ENCODE measurements at regions of chr2 and their contacts with region 1.

Region 1: GRCh38 chr2:62415019-62415431 is 91.0 kb downstream of the TMEM17 start:
- DNase-seq: no peak
- ATAC-seq: no peak
- H3K4me3 ChIP-seq: no peak overlapping the region
- H3K27ac ChIP-seq: no peak overlapping the region
- H3K4me1 ChIP-seq: peaks cover 4% of the 10 kb centered on the region
- H3K27me3 ChIP-seq: no peaks in the 10 kb centered on the region
- CTCF ChIP-seq: no peak

Region 2: DNA sequence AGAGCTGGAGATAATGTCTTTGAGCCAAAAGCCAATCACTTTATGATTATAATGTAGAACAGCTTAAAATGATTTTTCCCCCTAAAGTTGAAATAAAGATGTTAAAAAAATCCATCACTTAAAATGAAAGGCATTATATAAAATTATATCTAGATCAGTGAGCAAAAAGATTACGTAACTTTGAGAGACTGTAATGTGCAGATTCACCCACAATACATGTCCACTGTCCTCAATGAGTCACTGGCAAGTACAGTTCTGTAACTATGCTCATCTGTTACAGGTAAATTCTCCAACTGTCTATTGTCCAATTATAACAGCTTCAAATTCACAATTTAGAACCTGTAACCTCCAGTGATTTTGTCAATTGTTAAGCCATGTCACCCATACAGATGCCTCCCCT is 580.1 kb before region 1 on chr2:
- intact Hi-C with region 1: no loop called
- DNase-seq: no peak
- ATAC-seq: no peak
- H3K4me3 ChIP-seq: no peak overlapping the region
- H3K27ac ChIP-seq: no peak overlapping the region
- H3K4me1 ChIP-seq: no peaks in the 10 kb centered on the region
- H3K27me3 ChIP-seq: no peaks in the 10 kb centered on the region
- CTCF ChIP-seq: no peak

Region 3: GRCh38 chr2:61922714-61923113 is 492.3 kb before region 1 on chr2:
- intact Hi-C with region 1: loop called (anchors 2 kb)
- DNase-seq: no peak
- ATAC-seq: no peak
- H3K4me3 ChIP-seq: no peak overlapping the region
- H3K27ac ChIP-seq: no peak overlapping the region
- H3K4me1 ChIP-seq: peaks cover 6% of the 10 kb centered on the region
- H3K27me3 ChIP-seq: no peaks in the 10 kb centered on the region
- CTCF ChIP-seq: no peak

Region 4: DNA sequence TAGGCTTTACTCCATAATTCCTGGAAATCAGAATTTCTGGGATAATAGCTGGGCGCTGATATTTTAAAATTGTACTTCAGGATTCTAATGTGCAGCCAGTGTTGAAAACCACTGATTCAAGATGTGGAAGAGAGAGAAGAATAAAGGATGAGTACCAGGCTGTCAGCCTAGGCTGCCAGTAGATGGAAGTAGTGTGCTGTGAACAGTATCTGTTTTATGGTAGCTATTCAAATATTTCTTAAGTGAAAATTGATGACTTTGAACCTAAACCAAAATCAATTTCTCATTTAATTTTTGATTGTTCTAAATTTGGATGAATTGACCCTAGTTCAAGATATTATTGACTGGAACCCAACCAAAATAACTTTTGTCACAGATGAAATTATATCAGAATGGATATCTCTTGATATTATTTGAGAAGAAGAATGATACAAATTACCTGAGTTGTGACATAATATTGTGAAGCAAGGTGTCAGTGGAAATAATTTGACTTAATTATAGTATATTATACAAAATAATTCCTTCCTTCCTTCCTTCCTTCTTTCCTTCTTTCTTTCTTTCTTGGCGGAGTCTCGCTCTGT is 421.5 kb before region 1 on chr2:
- intact Hi-C with region 1: loop called (anchors 2 to 10 kb)
- DNase-seq: no peak
- ATAC-seq: peak in 3 of 4 donors; percentile 63 to 78 (median 67)
- H3K4me3 ChIP-seq: no peak overlapping the region
- H3K27ac ChIP-seq: no peak overlapping the region
- H3K4me1 ChIP-seq: no peaks in the 10 kb centered on the region
- H3K27me3 ChIP-seq: no peaks in the 10 kb centered on the region
- CTCF ChIP-seq: peak; percentile 65